Ovary (tissue), 10 donors: ENCODE measurements at regions of chr12 and their contacts with region 1.

Region 1: DNA sequence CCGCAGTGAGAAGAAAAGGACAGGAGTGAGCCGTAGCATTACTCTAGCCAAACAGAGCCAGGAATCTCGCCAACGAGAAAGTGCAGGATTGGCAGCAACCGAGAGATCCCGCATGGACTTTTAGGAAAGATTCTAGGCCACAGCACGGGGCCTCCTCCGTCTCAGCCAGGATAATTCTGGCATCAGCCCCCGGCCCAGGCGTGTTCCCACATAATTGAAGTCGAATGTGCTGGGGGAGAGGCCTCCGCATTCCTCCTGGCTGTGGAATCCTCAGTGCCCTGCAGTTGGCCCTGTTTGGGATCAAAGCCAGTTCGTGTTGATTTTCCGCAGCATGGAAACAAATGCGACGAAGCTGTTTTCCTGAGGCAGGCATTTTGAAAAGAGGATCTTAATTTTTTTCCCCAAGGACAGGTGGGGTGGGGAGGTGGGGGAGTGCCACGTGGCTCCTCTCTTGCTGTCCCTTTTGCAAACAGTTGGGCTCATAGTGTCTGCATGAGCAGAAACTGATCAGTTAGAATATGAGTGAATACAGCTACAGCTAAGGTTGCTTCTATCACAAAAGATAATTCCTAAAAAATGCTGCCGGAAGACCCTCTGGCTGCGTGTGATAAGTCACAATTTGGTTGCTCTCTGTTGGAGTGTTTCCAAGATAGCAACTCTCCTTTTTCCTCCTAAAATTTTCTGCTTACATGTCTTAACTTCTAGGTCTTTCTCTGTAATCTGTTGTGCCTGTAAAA is 37.3 kb upstream of the ATXN2 start:
- DNase-seq: peak; percentile 79 to 91 (median 87)
- H3K4me3 ChIP-seq: no peak overlapping the region
- H3K27ac ChIP-seq: peak overlapping the region in 1 of 2 donors; percentile 84
- H3K4me1 ChIP-seq: peaks cover 18% of the 10 kb centered on the region
- H3K27me3 ChIP-seq: no peaks in the 10 kb centered on the region
- CTCF ChIP-seq: no peak
- EP300 ChIP-seq: no peak
- POLR2A ChIP-seq: peak; percentile 17

Region 2: GRCh38 chr12:111505601-111506036 is 130.8 kb before region 1 on chr12:
- intact Hi-C with region 1: no loop called
- DNase-seq: no peak
- H3K4me3 ChIP-seq: no peak overlapping the region
- H3K27ac ChIP-seq: no peak overlapping the region
- H3K4me1 ChIP-seq: no peaks in the 10 kb centered on the region
- H3K27me3 ChIP-seq: no peaks in the 10 kb centered on the region
- CTCF ChIP-seq: no peak
- EP300 ChIP-seq: no peak
- POLR2A ChIP-seq: no peak

Region 3: GRCh38 chr12:111599459-111600204 is 36.7 kb before region 1 on chr12:
- intact Hi-C with region 1: loop called in 1 of 4 experiments (anchors 5 kb)
- DNase-seq: peak; percentile 90 to 93 (median 92)
- H3K4me3 ChIP-seq: peak overlapping the region; percentile 74
- H3K27ac ChIP-seq: peak overlapping the region; percentile 97 to 99
- H3K4me1 ChIP-seq: peaks cover 3% of the 10 kb centered on the region
- H3K27me3 ChIP-seq: no peaks in the 10 kb centered on the region
- CTCF ChIP-seq: no peak
- EP300 ChIP-seq: no peak
- POLR2A ChIP-seq: peak; percentile 81